Activated T-helper 2 cell treated with anti-CD3 and anti-CD28 coated beads, Interferon-gamma antibody, Interleukin-2, Interleukin-4, amounts not matched to agents 10 μg/mL and 5 μg/mL and 100 μg/mL, durations not matched to agents 14 hours and 24 hours and 36 hours (primary cell): ENCODE measurements at regions of chr18 and their contacts with region 1.

Region 1: DNA sequence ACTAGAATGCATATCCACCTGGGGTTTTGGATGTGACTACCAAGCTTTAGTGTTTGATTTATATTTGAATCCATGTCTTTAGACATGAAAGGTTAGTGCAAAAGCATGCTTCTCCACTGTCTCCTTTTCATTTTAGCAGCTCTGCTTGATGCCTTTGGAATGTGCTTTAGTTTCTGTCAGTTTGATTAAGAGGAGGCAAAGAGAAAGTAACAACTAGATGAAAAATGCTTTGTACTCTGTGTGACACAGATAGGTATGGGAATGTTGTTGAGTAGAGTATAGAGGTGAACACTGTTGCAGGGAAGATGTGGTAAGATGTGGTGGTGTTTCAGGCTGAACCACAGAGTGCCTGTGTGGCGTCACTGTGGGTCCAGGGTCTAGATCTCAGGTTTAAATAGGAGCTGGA is 19.8 kb downstream of the PIK3C3 start:
- DNase-seq: no peak
- H3K4me3 Mint-ChIP-seq: peak overlapping the region; percentile 10
- H3K27ac Mint-ChIP-seq: peak overlapping the region; percentile 41
- H3K4me1 Mint-ChIP-seq: peaks cover 27% of the 10 kb centered on the region
- H3K27me3 Mint-ChIP-seq: no peaks in the 10 kb centered on the region

Region 2: GRCh38 chr18:41954827-41955613 is 19.8 kb before region 1 on chr18 and contains the start of gene PIK3C3:
- intact Hi-C with region 1: loop called (anchors 2 kb)
- DNase-seq: peak; percentile 93
- H3K4me3 Mint-ChIP-seq: peak within 1 kb of the TSS; percentile 100
- H3K27ac Mint-ChIP-seq: peak within 1 kb of the TSS; percentile 98
- H3K4me1 Mint-ChIP-seq: peaks cover 23% of the 10 kb centered on the region
- H3K27me3 Mint-ChIP-seq: peaks cover 3% of the 10 kb centered on the region
- total RNA-seq, gene PIK3C3: 50.4 and 51.6 TPM in 2 replicates

Region 3: DNA sequence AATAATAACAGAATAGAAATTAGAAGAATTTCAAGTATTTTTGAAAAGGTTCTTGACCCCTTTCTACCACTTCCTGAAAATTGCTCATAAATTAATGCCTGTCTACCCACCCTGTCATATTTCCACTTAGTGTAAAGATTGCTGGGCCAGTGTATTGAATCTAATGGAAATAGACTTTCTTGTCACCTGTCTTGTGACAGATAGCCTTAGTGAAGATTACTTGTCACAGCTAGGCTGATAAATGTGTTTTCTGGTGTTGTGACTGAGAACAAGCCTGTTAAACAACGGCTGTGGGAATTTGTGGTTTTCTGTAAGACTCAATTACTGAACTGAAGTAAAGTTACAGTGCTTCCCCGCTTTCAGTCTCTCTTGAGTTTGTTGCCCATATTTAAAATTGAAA is 17.3 kb after region 1 on chr18:
- intact Hi-C with region 1: no loop called
- DNase-seq: no peak
- H3K4me3 Mint-ChIP-seq: no peak overlapping the region
- H3K27ac Mint-ChIP-seq: no peak overlapping the region
- H3K4me1 Mint-ChIP-seq: peaks cover 2% of the 10 kb centered on the region
- H3K27me3 Mint-ChIP-seq: no peaks in the 10 kb centered on the region